ENCODE measurements at regions of chr3 and their contacts with region 1.

Region 1: DNA sequence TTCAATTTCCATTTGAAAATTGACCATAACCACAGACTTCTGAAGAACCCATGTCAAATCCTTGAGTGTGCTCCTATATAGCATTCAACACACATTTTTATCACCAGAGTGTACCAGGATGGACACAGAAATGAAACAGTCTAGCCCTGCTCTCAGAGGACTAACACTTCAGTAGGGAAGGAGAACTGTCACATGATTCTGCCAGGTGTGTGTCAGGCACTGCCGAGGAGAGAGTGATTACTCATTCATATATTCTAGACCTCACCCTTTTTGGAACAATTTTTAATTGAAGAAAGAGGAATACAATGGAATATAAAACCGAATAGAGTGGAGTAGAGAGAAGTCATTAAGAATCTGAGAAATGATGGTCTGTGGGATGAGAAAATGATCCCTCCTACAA is 125.8 kb downstream of the ERC2 start:
- DNase-seq: no peak
- H3K4me3 ChIP-seq: no peak overlapping the region
- H3K27ac ChIP-seq: no peak overlapping the region
- H3K4me1 ChIP-seq: no peaks in the 10 kb centered on the region
- H3K27me3 ChIP-seq: no peaks in the 10 kb centered on the region
- CTCF ChIP-seq: no peak

Region 2: GRCh38 chr3:56453011-56453410 is 110.5 kb after region 1 on chr3:
- intact Hi-C with region 1: loop called (anchors 5 kb)
- DNase-seq: no peak
- H3K4me3 ChIP-seq: no peak overlapping the region
- H3K27ac ChIP-seq: no peak overlapping the region
- H3K4me1 ChIP-seq: no peaks in the 10 kb centered on the region
- H3K27me3 ChIP-seq: no peaks in the 10 kb centered on the region
- CTCF ChIP-seq: no peak

Region 3: DNA sequence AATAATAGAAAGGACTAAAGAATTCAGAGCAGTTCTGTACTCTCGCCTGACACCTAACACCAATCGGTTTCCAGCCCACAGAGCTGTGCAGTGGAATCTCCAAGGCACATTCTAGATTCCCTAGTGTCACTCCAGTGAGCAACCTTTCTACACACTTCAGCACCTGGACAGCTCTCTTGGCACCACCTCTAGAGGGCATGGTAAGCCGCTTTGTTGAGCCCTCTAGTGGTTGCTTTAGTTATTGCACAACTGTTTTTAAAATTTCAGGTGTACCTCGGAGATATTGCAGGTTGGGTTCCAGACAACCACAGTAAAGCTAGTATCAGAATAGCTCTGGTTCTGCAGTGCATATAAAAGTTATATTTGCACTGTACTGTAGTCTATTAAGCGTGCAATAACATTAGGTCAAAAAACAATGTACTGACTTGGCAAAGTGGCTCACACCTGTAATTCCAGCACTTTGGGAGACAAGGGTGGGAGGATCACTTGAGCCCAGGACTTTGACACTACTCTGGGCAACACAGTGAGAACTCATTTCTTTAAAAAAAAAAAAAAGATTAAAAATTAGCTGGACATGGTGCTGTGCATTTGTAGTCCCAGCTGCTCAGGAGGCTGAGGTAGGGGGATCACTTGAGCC is 152.3 kb after region 1 on chr3:
- intact Hi-C with region 1: loop called (anchors 5 kb)
- DNase-seq: peak; percentile 84
- H3K4me3 ChIP-seq: no peak overlapping the region
- H3K27ac ChIP-seq: no peak overlapping the region
- H3K4me1 ChIP-seq: no peaks in the 10 kb centered on the region
- H3K27me3 ChIP-seq: no peaks in the 10 kb centered on the region
- CTCF ChIP-seq: peak; percentile 87

Measured in colonic mucosa (tissue), 4 donors.